ENCODE measurements at regions of chr1 and their contacts with region 1.

Region 1: GRCh38 chr1:9689011-9689706 is 37.6 kb downstream of the PIK3CD start:
- DNase-seq: peak; percentile 94
- H3K4me3 Mint-ChIP-seq: peak overlapping the region; percentile 78
- H3K27ac Mint-ChIP-seq: no peak overlapping the region
- H3K4me1 Mint-ChIP-seq: peaks cover 64% of the 10 kb centered on the region
- H3K27me3 Mint-ChIP-seq: no peaks in the 10 kb centered on the region

Region 2: DNA sequence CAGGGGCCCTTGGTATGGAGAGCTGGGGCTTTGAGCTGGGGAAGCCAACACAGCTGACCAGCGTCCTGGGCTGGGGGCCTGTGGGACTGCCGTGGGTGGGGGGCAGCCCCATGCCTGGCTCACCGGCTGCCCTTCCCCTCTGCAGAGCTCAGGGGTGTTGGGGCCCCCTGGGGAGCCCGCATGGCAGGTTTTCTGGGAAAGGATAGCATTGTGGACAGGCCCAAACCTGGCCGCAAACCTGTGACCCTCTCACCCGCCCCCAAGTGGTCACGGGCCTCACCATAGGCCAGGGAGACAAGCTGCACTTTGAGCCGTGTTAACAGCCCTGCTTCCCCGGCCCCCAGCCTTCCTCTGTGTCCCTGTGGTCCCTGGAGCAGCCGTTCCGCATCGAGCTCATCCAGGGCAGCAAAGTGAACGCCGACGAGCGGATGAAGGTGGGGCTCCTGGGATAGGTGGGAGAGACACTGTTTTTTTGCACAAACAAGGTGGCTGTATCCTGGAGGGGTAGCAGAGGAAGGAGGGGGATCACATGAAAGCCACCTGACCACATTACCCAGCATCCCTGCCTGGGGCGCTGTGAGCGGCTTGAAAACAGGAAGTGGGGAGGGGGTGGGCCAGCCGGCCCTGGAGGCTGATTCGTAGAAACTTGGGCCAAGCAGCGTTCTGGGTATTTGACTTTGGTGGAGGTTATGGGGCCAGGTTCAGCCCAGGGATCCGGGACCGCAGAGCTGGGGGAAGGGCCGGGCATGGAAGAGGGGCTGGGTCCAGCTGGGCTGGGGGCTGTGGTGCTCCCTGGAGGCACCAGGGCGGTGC is 28.2 kb after region 1 on chr1:
- intact Hi-C with region 1: loop called (anchors 2 kb)
- DNase-seq: peak; percentile 96
- H3K4me3 Mint-ChIP-seq: peak overlapping the region; percentile 82
- H3K27ac Mint-ChIP-seq: peak overlapping the region; percentile 92
- H3K4me1 Mint-ChIP-seq: peaks cover 57% of the 10 kb centered on the region
- H3K27me3 Mint-ChIP-seq: no peaks in the 10 kb centered on the region